Activated CD8-positive, alpha-beta T cell treated with anti-CD3 and anti-CD28 coated beads for 36 hours (primary cell): ENCODE measurements at regions of chr22 and their contacts with region 1.

Region 1: GRCh38 chr22:42863349-42863961 is 6.4 kb upstream of the ARFGAP3 start:
- DNase-seq: peak; percentile 79
- ATAC-seq: peak; percentile 71
- H3K4me3 Mint-ChIP-seq: no peak overlapping the region
- H3K27ac Mint-ChIP-seq: peak overlapping the region; percentile 60
- H3K4me1 Mint-ChIP-seq: peaks cover 25% of the 10 kb centered on the region
- H3K27me3 Mint-ChIP-seq: no peaks in the 10 kb centered on the region
- CTCF ChIP-seq: no peak

Region 2: DNA sequence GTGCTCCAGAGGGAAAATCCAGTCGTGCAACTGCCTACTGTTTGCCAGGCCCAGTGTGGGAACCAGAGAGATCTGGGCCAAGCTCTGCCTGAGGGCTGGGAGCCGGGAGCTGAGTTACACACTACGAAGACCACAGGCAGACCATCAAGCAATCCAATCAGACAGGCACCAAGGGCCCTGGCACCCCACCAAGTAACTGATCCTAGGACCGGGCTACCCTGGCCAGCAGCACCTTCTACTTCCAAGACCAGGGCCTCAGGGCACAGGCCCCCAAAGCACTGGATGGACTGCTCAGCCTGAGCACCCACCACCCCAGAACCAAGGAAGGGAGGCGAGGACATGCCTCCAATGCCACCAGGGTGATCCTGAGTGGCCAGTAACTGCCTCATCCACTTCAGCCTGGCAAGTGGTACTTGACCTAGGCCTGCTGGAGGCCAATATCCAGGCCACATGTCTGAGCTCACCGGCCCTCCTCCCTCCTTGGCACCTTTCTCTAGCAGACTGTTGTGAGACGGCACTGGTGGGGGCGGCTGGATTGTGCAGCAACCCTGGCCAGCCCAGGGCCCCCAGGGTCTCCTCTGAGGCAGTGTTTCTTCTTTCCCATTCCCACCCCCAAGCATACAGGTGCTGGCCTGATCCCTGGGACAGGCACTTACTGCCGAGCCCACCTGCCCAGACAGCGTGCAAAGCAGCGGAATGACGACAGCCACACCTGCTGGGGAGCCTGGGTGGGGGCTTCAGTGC is 14.3 kb after region 1 on chr22:
- CTCF ChIA-PET with region 1: interaction called, 11 read pairs
- POLR2A ChIA-PET with region 1: interaction called, 3 read pairs
- intact Hi-C with region 1: no loop called
- DNase-seq: no peak
- ATAC-seq: no peak
- H3K4me3 Mint-ChIP-seq: no peak overlapping the region
- H3K27ac Mint-ChIP-seq: no peak overlapping the region
- H3K4me1 Mint-ChIP-seq: no peaks in the 10 kb centered on the region
- H3K27me3 Mint-ChIP-seq: no peaks in the 10 kb centered on the region
- CTCF ChIP-seq: no peak

Region 3: DNA sequence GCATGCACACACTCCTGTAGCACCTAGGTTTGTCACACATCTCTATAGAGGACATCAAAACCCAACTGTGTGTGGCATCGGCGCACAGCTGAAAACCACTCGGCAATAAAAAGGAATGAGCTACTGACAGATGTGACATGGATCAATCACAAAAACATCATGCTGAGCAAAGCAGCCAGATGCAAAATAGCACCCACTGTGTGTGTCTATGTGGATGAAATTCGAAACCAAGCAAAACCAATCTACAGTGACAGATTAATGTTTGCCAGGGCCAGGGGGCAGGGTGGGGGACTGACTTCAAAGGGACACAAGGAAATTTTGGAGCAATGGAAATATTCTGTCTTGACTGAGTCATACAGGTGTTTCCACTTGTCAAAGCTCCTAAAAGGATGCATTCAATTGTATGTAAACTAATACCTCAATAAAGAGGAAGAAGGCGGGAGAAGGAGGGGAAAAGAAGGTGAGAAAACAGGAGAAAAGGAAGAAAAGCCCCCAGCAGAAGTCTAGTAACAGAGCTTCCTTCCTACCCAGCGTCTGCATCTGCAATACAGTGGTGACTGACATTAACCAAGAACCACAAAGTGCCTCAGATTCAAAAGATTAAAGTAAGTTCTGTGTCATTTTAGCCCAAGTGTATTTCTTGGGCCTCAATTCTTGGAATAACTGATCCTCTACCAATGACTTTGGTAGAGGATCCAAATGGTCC is 101.7 kb after region 1 on chr22:
- CTCF ChIA-PET with region 1: no interaction called
- POLR2A ChIA-PET with region 1: no interaction called
- intact Hi-C with region 1: loop called (anchors 1 kb)
- DNase-seq: peak; percentile 72
- ATAC-seq: peak; percentile 90
- H3K4me3 Mint-ChIP-seq: peak overlapping the region; percentile 1
- H3K27ac Mint-ChIP-seq: peak overlapping the region; percentile 83
- H3K4me1 Mint-ChIP-seq: peaks cover 62% of the 10 kb centered on the region
- H3K27me3 Mint-ChIP-seq: no peaks in the 10 kb centered on the region
- CTCF ChIP-seq: no peak